HCT116 (cell line): ENCODE measurements at regions of chr19 and their contacts with region 1.

Region 1: GRCh38 chr19:4815426-4816201 is 15.9 kb downstream of the TICAM1 start:
- DNase-seq: peak; percentile 91
- ATAC-seq: peak; percentile 71
- H3K4me3 ChIP-seq: no peak overlapping the region
- H3K27ac ChIP-seq: peak overlapping the region; percentile 76
- H3K4me1 ChIP-seq: peaks cover 21 to 53% of the 10 kb centered on the region in 2 experiments
- H3K27me3 ChIP-seq: no peaks in the 10 kb centered on the region
- CTCF ChIP-seq: no peak
- POLR2A ChIP-seq: no peak
- RAD21 ChIP-seq: no peak

Region 2: GRCh38 chr19:4597975-4598671 is 217.5 kb before region 1 on chr19:
- CTCF ChIA-PET with region 1: no interaction called
- POLR2A ChIA-PET with region 1: no interaction called
- RAD21 ChIA-PET with region 1: no interaction called
- intact Hi-C with region 1: no loop called
- DNase-seq: no peak
- ATAC-seq: peak; percentile 83
- H3K4me3 ChIP-seq: peak overlapping the region; percentile 31 to 38
- H3K27ac ChIP-seq: peak overlapping the region; percentile 38; the same call in 1 of the 2 replicates
- H3K4me1 ChIP-seq: peaks cover 6 to 19% of the 10 kb centered on the region in 2 experiments
- H3K27me3 ChIP-seq: no peaks in the 10 kb centered on the region
- CTCF ChIP-seq: no peak
- POLR2A ChIP-seq: no peak
- RAD21 ChIP-seq: no peak

Region 3: DNA sequence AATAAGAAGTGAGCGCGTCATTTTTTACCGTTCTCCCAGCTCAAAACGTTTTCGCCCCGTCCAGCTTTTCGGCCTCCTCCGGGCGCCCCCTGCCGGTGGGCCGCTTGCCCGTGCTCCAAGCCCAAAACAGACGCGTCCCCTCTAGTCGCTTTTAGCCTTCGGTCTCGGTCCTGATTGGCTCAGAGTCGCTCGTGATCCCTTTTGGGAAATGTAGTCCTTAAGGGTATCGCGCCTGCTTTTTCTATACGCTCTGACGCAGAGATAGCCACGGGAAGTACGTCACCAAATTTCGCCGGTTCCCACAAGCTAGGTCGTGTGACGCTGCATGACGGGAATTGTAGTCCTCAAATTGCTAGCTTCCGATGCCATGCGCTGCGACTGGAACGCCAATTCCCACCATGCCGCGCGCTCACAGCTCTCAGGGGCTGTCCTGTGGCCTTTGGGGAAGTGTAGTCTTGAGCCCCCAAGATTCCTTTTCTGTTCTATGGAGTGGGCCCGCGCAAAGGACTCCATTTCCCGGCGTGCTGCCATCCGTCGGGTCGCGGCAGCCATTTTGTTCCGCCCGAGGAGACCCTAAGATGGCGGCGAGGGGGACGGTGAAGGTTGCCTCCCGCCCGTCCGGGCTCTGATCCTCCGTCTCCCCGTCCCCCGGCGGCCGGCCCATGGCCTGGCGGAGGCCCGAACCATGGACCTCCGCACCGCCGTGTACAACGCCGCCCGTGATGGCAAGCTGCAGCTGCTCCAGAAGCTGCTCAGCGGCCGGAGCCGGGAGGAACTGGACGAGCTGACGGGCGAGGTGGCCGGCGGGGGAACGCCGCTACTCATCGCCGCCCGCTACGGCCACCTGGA is 24.2 kb before region 1 on chr19 and contains the start of gene FEM1A:
- CTCF ChIA-PET with region 1: interaction called, 15 read pairs
- POLR2A ChIA-PET with region 1: no interaction called
- RAD21 ChIA-PET with region 1: no interaction called
- intact Hi-C with region 1: no loop called
- DNase-seq: peak; percentile 100
- ATAC-seq: peak; percentile 94
- H3K4me3 ChIP-seq: peak within 1 kb of the TSS; percentile 75 to 87
- H3K27ac ChIP-seq: peak within 1 kb of the TSS; percentile 97
- H3K4me1 ChIP-seq: peaks cover 12 to 20% of the 10 kb centered on the region in 2 experiments
- H3K27me3 ChIP-seq: no peaks in the 10 kb centered on the region
- CTCF ChIP-seq: peak; percentile 97 to 99 (median 97)
- POLR2A ChIP-seq: peak; percentile 62
- RAD21 ChIP-seq: peak; percentile 96
- total RNA-seq, gene FEM1A: 17.7 TPM

Region 4: GRCh38 chr19:4851551-4852290 is 36.1 kb after region 1 on chr19:
- CTCF ChIA-PET with region 1: interaction called, 63 read pairs
- POLR2A ChIA-PET with region 1: interaction called, 5 read pairs
- RAD21 ChIA-PET with region 1: interaction called, 10 to 14 read pairs
- intact Hi-C with region 1: no loop called
- DNase-seq: no peak
- ATAC-seq: peak; percentile 95
- H3K4me3 ChIP-seq: no peak overlapping the region
- H3K27ac ChIP-seq: no peak overlapping the region
- H3K4me1 ChIP-seq: no peaks in the 10 kb centered on the region
- H3K27me3 ChIP-seq: no peaks in the 10 kb centered on the region
- CTCF ChIP-seq: peak; percentile 44 to 87 (median 87)
- POLR2A ChIP-seq: no peak
- RAD21 ChIP-seq: peak; percentile 71

Region 5: DNA sequence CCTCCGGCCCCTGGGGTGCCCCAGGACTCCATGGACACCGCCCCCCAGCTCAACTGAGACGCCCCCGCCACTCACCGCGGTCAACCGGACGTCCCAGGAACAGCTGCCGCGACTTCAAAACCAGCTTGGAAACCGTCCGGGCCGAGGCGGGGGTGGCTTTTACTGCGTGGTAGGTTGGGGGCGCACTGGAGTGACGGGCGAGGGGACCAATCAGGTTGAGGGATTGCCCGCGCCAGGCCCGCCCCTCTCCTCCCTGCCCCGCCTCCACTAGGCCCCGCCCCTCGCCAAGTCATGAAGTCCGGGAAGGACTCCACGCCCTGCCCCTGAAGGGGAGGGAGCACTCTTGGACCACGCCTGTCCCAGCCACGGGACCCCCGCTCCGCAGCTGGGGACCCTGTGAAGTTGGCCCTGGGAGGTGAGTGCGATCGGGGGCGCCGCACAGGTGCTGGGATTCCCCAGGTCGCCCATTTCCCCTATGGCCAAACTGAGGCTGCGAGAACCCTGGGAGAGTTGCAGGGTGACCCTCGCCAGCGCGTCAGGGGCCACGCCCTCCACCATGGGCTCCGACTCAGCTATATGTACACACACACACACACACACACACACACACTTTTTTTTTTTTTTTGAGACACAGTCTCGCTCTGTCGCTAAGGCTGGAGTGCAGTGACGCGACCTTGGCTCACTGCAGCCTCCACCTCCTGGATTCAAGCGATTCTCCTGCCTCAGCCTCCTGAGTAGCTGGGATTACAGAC is 52.1 kb after region 1 on chr19 and contains the start of gene PLIN3:
- CTCF ChIA-PET with region 1: interaction called, 3 read pairs
- POLR2A ChIA-PET with region 1: interaction called, 3 read pairs
- RAD21 ChIA-PET with region 1: interaction called in 1 of 2 experiments, 4 read pairs
- intact Hi-C with region 1: loop called (anchors 1 kb)
- DNase-seq: peak; percentile 88
- ATAC-seq: peak; percentile 72
- H3K4me3 ChIP-seq: peak within 1 kb of the TSS; percentile 94 to 96
- H3K27ac ChIP-seq: peak within 1 kb of the TSS; percentile 95
- H3K4me1 ChIP-seq: peaks cover 49 to 76% of the 10 kb centered on the region in 2 experiments
- H3K27me3 ChIP-seq: no peaks in the 10 kb centered on the region
- CTCF ChIP-seq: no peak
- POLR2A ChIP-seq: no peak
- RAD21 ChIP-seq: no peak
- total RNA-seq, gene PLIN3: 207 TPM

Region 6: GRCh38 chr19:4909897-4910593 is 94.4 kb after region 1 on chr19:
- CTCF ChIA-PET with region 1: interaction called, 78 read pairs
- POLR2A ChIA-PET with region 1: interaction called, 8 read pairs
- RAD21 ChIA-PET with region 1: interaction called in 1 of 2 experiments, 6 read pairs
- intact Hi-C with region 1: no loop called
- DNase-seq: peak; percentile 68
- ATAC-seq: peak; percentile 74
- H3K4me3 ChIP-seq: peak overlapping the region; percentile 55 to 90
- H3K27ac ChIP-seq: peak overlapping the region; percentile 98
- H3K4me1 ChIP-seq: peaks cover 50 to 60% of the 10 kb centered on the region in 2 experiments
- H3K27me3 ChIP-seq: no peaks in the 10 kb centered on the region
- CTCF ChIP-seq: no peak
- POLR2A ChIP-seq: no peak
- RAD21 ChIP-seq: no peak

Region 7: GRCh38 chr19:4968462-4969291 is 153.1 kb after region 1 on chr19 and contains the start of gene KDM4B:
- CTCF ChIA-PET with region 1: interaction called, 5 read pairs
- POLR2A ChIA-PET with region 1: interaction called, 3 read pairs
- RAD21 ChIA-PET with region 1: no interaction called
- intact Hi-C with region 1: loop called (anchors 2 kb)
- DNase-seq: peak; percentile 98
- ATAC-seq: peak; percentile 92
- H3K4me3 ChIP-seq: peak within 1 kb of the TSS; percentile 67 to 76
- H3K27ac ChIP-seq: peak within 1 kb of the TSS; percentile 76
- H3K4me1 ChIP-seq: peaks cover 44 to 64% of the 10 kb centered on the region in 2 experiments
- H3K27me3 ChIP-seq: no peaks in the 10 kb centered on the region
- CTCF ChIP-seq: no peak
- POLR2A ChIP-seq: peak; percentile 78
- RAD21 ChIP-seq: no peak
- total RNA-seq, gene KDM4B: 35.9 TPM